ENCODE measurements at regions of chr15 and their contacts with region 1.

Region 1: DNA sequence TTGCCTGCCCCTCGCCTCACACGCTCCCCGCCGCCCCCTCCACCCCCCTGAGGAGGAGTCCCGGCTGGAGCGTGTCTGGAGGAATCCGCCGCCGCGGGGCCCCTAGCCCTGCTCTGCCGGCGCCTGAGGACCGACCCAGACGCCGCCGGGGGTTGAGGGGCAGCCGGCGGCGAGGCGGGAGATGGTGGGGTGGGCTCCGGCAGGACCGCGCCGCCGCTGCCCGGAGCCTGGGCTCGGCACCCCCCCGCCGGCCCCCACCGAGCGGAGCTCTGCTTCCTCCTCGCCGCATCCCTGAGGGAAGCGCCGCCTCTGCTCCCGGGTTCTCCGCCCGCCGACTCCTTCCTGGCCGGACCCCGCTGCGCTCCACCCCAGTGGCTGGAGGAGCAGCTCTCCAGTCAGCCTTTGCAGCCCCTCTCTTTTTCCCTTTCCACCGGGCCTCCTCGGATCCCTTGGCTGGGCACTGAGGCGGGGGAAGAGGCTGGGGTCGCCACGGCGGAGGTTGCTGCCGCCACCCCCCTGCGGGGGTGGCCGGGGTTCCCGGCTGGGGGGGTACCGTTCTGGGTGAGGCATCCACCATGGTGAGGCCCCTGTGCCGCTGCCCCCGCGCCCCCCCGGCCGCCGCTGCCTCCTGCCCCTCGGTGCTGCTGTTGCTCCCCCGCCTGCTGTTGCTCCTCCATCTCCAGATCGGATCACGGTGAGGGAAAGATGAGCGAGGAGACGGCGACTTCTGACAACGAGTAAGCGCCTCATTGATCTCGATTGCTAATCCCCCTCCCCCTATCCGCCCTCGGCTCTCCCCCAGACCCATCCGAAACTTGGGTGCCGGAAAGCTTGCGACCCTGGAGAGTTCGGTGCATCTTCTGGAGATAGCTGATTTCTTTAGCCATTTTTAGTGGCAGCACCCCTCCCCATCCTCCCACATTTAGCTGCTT is at the start of gene SPRED1:
- DNase-seq: peak; percentile 57
- H3K4me3 ChIP-seq: peak within 1 kb of the TSS; percentile 86 to 96 (median 91)
- H3K27ac ChIP-seq: peak within 1 kb of the TSS; percentile 72
- H3K4me1 ChIP-seq: peaks cover 16% of the 10 kb centered on the region
- H3K27me3 ChIP-seq: no peaks in the 10 kb centered on the region
- CTCF ChIP-seq: no peak
- total RNA-seq, gene SPRED1: 25.7 to 47.7 TPM

Region 2: DNA sequence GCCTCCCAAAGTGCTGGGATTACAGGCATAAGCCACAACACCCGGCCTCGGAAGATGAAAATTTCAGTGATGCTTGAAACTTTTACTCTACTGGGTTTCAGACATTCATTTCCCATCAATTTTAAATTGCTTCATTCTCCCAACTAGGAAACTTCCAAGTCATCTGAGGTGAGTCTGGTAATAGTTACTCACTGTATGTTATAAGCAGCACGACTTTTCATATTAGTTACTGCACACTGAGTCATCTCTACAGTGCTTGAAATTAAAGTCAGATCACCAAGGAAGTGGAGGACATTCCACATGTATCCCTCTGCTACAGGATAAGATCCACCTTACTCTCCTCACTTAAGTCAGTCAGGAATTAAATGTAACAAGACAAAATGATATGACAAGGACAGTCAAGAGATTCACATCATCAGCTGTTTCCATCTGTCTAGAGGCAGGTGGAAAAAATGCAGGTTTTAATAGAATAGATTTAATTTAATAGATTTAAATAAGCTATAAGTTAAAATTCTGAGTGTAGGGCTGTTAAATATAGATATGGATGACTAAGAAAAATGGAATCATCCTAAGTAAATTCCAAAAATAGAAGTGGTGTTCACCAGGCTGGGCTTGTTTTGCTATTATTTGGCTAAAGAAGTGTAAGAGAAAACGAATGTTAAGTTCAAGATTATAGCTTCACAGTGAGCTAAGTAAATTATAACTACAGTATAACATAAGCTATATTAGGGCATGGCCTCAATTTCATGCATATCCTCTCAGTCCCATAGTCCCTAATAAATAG is 213.9 kb before region 1 on chr15:
- CTCF ChIA-PET with region 1: no interaction called
- dilution Hi-C with region 1: no loop called
- in situ Hi-C with region 1: no loop called
- intact Hi-C with region 1: loop called (anchors 10 kb)
- DNase-seq: peak; percentile 80
- H3K4me3 ChIP-seq: no peak overlapping the region
- H3K27ac ChIP-seq: peak overlapping the region; percentile 62
- H3K4me1 ChIP-seq: peaks cover 62% of the 10 kb centered on the region
- H3K27me3 ChIP-seq: no peaks in the 10 kb centered on the region
- CTCF ChIP-seq: no peak

Region 3: GRCh38 chr15:38129531-38130204 is 123.1 kb before region 1 on chr15:
- CTCF ChIA-PET with region 1: no interaction called
- dilution Hi-C with region 1: no loop called
- in situ Hi-C with region 1: no loop called
- intact Hi-C with region 1: loop called (anchors 2 kb)
- DNase-seq: peak; percentile 93
- H3K4me3 ChIP-seq: peak overlapping the region; percentile 26 to 34 (median 34)
- H3K27ac ChIP-seq: peak overlapping the region; percentile 79
- H3K4me1 ChIP-seq: peaks cover 50% of the 10 kb centered on the region
- H3K27me3 ChIP-seq: no peaks in the 10 kb centered on the region
- CTCF ChIP-seq: no peak

Region 4: GRCh38 chr15:38207621-38208020 is 45.1 kb before region 1 on chr15:
- CTCF ChIA-PET with region 1: interaction called, 3 read pairs
- dilution Hi-C with region 1: no loop called
- in situ Hi-C with region 1: no loop called
- intact Hi-C with region 1: loop called (anchors 1 kb)
- DNase-seq: peak; percentile 77
- H3K4me3 ChIP-seq: no peak overlapping the region
- H3K27ac ChIP-seq: no peak overlapping the region
- H3K4me1 ChIP-seq: peaks cover 15% of the 10 kb centered on the region
- H3K27me3 ChIP-seq: no peaks in the 10 kb centered on the region
- CTCF ChIP-seq: no peak

Region 5: DNA sequence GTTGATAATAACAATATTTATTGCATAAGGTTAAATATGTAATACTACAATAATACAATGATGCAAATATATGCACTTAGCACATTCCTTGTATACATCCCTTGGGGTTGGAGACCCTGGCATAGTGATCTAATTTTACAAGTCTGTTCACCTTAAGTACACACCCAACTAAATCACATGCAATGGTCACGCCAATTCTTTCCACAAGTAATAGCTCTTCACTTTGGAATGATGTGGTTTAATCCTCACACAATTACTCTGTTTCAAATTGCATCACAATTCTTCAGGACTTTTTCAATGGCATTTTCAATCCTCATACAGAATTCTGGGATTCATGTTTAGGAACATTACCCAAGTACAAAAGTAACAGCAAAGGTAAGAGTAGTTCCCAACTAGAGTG is 27.4 kb before region 1 on chr15:
- CTCF ChIA-PET with region 1: no interaction called
- dilution Hi-C with region 1: no loop called
- in situ Hi-C with region 1: no loop called
- intact Hi-C with region 1: loop called (anchors 1 kb)
- DNase-seq: peak; percentile 46
- H3K4me3 ChIP-seq: no peak overlapping the region
- H3K27ac ChIP-seq: no peak overlapping the region
- H3K4me1 ChIP-seq: peaks cover 13% of the 10 kb centered on the region
- H3K27me3 ChIP-seq: no peaks in the 10 kb centered on the region
- CTCF ChIP-seq: no peak

Region 6: GRCh38 chr15:38389924-38390542 is 137.3 kb after region 1 on chr15:
- CTCF ChIA-PET with region 1: no interaction called
- dilution Hi-C with region 1: no loop called
- in situ Hi-C with region 1: no loop called
- intact Hi-C with region 1: loop called (anchors 5 kb)
- DNase-seq: peak; percentile 47
- H3K4me3 ChIP-seq: no peak overlapping the region
- H3K27ac ChIP-seq: no peak overlapping the region
- H3K4me1 ChIP-seq: no peaks in the 10 kb centered on the region
- H3K27me3 ChIP-seq: no peaks in the 10 kb centered on the region
- CTCF ChIP-seq: peak; percentile 89 to 95

Measured in mammary epithelial cell (primary cell).